ENCODE measurements at regions of chr19 and their contacts with region 1.

Region 1: GRCh38 chr19:43738780-43739211 is 16.0 kb downstream of the SMG9 start:
- DNase-seq: peak; percentile 66
- H3K4me3 ChIP-seq: no peak overlapping the region
- H3K27ac ChIP-seq: peak overlapping the region; percentile 81 to 90 (median 88)
- H3K4me1 ChIP-seq: peaks cover 0 to 26% (median 20%) of the 10 kb centered on the region in 4 donors
- H3K27me3 ChIP-seq: no peaks in the 10 kb centered on the region
- CTCF ChIP-seq: no peak
- EP300 ChIP-seq: no peak
- POLR2A ChIP-seq: no peak

Region 2: DNA sequence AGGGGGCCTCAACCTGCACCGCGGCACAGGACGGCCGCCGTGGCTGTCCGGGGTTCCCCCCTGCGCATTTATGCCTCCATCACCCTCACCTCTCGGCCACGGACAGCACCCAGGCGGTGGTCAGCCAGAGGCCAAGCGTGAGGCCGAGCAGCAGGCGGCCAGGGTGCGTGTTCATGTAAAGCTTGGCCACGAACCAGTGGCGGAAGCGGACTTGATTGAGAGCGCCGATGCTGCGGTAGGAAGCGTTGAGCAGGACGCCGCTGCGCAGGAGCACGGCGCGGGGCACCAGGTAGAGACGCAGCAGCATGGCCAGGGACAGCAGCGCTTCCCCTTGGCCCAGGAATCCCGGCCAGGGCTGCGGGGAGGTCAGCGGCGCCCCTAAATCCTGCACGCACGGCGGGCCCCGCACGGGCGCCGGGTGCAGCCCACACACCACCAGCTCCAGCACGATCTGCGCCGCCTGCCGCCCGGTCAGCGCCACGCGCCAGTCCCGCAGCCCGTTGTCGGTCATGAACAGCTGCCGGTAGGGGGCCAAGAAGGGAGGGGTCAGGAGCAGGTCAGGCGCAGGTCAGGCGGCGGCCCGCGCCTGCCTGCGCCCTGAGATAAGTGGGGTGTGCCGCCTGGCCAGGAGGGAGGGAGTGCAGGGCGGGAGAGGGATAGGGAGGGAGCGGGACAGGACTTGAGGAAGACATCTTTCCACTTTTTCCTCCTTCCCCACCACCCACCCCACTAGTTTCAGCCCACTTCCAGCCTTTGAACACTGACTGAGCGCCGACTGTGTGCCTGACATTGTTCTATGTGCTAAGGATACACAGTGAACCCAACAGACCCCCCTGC is 35.5 kb after region 1 on chr19:
- in situ Hi-C with region 1: no loop called
- intact Hi-C with region 1: no loop called
- DNase-seq: peak; percentile 78
- H3K4me3 ChIP-seq: peak overlapping the region in 1 of 4 donors; percentile 16
- H3K27ac ChIP-seq: no peak overlapping the region
- H3K4me1 ChIP-seq: peaks cover 31 to 56% (median 41%) of the 10 kb centered on the region in 4 donors
- H3K27me3 ChIP-seq: no peaks in the 10 kb centered on the region
- CTCF ChIP-seq: peak; percentile 50 to 90 (median 59)
- EP300 ChIP-seq: no peak
- POLR2A ChIP-seq: no peak

Region 3: DNA sequence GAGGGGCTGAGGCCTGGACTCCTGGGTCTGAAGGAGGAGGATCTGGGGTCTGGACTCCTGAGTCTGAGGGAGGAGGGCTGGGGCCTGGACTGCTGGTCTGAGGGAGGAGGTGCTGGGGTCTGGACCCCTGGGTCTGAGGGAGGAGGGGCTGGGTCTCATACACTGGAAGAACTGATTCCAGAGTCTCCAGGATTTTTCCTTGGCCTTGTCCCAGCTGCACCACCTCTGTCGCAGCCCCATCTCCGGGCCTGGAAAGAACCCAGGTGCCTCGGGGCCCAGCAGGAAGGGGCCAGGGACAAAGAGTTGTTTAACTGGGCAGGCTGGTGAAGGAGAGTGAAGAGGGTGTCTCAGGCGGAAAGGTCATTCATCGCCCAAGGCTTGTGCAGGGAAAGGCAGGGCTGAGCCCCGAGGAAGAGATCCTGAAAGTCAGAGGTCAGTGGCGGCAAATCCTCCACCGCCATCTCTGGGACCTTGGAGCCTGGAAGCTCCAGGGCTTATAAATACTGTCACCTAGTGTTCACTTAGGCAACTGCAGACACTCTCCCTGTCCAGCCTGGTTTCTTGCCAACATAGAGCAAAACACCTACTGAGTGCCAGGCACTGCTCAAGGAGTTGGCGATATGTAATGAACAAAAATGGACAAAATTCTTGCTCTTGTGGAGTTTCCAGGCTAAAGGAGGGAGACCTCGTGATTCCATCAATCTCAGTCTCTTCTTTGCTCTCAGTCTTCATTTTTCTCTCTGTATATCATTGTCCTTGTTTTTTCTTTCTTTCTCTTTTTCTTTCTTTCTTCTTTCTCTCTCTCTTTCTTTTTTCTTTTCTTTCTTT is 46.4 kb after region 1 on chr19:
- in situ Hi-C with region 1: loop called in 2 of 4 experiments (anchors 5 kb)
- intact Hi-C with region 1: no loop called
- DNase-seq: peak; percentile 70
- H3K4me3 ChIP-seq: no peak overlapping the region
- H3K27ac ChIP-seq: peak overlapping the region; percentile 44 to 67 (median 50)
- H3K4me1 ChIP-seq: peaks cover 14 to 35% (median 23%) of the 10 kb centered on the region in 4 donors
- H3K27me3 ChIP-seq: no peaks in the 10 kb centered on the region
- CTCF ChIP-seq: peak; percentile 97 to 99 (median 97)
- EP300 ChIP-seq: no peak
- POLR2A ChIP-seq: no peak

Region 4: DNA sequence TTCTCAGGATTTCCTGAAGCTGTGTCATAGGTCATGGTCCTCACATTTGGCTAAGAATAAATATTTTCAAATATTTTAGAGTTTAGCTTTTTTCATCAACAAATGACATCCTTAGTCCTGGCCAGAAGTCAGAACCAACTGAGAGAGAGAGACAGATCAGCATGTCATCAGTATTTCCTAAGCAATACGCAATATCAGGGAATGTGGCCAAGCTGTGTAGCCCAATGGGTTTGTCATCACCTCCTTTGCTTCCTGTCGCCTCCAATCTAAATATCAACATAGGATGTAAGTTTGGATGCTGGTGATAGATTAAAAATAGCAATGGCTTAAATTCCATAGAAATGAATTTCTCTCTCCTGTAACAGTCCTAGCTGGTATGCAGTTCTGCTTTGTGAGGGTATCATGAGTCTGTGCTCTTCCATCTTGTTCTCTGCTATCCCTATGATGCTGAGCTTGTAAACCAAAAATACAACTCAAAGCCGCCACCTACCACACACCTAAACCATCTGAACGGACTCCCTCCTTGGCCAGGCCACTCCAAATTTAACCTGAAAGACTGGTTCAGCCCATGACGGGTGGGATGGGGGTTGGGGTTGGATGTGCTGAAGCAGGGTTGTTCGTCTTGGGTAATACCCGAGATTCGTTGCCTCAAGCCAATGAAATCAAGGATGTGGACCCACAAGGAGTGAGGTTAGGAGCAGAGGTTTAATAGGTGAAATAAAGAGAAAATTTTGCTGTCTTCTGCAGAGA is 864.6 kb after region 1 on chr19:
- in situ Hi-C with region 1: no loop called
- intact Hi-C with region 1: loop called (anchors 5 kb)
- DNase-seq: no peak
- H3K4me3 ChIP-seq: no peak overlapping the region
- H3K27ac ChIP-seq: no peak overlapping the region
- H3K4me1 ChIP-seq: peaks cover 0 to 40% (median 12%) of the 10 kb centered on the region in 4 donors
- H3K27me3 ChIP-seq: no peaks in the 10 kb centered on the region
- CTCF ChIP-seq: no peak
- EP300 ChIP-seq: no peak
- POLR2A ChIP-seq: no peak